GM10248 (cell line): ENCODE measurements at regions of chr4 and their contacts with region 1.

Region 1: GRCh38 chr4:100838286-100838685 is 320.5 kb upstream of the EMCN start:
- DNase-seq: no peak
- CTCF ChIP-seq: no peak

Region 2: DNA sequence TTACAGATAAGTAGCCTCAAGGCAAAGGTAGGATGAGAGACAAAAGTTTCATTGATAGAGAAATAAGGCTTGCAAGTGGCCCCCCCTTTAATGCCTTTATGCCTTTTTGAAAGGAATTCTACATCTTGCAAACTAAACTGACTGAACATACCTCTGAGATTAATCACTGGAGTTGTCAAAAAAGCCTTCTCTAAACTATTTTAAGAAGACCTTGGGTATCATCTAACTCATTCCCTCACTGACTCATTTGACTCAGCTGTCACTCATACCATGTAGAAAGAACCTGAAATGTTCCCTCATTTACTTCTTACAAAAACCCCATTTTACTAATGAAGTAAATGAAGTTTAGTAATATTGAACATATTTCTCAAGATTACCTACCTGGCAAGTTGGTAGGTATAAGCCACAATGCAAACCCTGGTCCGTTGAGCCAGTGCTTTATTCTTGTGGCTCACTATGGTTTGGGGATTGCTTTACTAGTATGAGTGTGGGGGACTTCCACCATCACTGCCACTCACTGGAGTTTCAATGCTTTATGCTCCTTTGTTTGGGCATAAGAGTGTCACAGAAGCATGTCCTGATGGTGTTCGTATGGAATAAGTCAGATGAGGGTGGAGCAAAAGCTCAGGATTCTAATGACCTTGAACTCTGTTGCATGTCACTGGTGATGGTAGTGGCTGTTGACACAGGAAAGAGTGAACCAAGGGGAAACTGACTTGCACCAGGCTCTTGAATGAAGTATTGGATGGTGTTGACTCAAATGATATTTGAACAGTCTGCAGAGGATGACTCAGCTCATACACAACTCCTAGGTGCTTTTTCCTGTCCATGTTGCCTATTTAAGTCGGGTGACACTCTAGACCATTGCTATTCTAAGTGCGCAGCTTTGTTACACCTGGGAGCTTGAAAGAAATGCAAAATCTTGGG is 15.0 kb before region 1 on chr4:
- CTCF ChIA-PET with region 1: interaction called, 11 read pairs
- POLR2A ChIA-PET with region 1: no interaction called
- DNase-seq: peak; percentile 9
- CTCF ChIP-seq: no peak

Region 3: GRCh38 chr4:100848869-100849268 is 10.6 kb after region 1 on chr4:
- CTCF ChIA-PET with region 1: interaction called, 12 read pairs
- POLR2A ChIA-PET with region 1: no interaction called
- DNase-seq: no peak
- CTCF ChIP-seq: peak; percentile 36

Region 4: GRCh38 chr4:100872811-100873210 is 34.5 kb after region 1 on chr4:
- CTCF ChIA-PET with region 1: no interaction called
- POLR2A ChIA-PET with region 1: no interaction called
- DNase-seq: no peak
- CTCF ChIP-seq: no peak

Region 5: DNA sequence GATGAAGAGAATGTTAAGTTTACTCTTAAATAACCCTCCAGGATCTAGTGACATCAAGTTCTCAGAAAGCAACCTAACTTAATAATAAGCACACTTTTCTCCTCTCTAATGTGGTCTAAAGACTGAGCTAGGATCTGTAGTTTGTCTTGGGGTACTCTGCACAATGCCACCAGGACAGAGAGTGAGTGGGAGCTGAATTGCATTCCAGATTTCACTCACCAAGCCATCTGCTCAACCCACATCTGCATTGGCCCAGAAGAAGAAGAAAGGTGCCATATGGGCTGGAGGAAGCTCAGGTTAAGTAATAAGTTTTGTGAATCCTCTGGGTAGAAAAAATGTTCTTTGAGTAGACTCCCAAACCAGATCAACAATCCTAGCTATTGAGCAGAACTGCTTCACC is 124.4 kb after region 1 on chr4:
- CTCF ChIA-PET with region 1: no interaction called
- POLR2A ChIA-PET with region 1: no interaction called
- DNase-seq: no peak
- CTCF ChIP-seq: no peak